ENCODE measurements at regions of chr3 and their contacts with region 1.

Region 1: GRCh38 chr3:50616003-50616769 is 765 bp upstream of the MAPKAPK3 start:
- DNase-seq: peak; percentile 95
- H3K4me3 ChIP-seq: peak overlapping the region; percentile 80 to 100 (median 82)
- H3K27ac ChIP-seq: peak overlapping the region; percentile 84 to 96 (median 88)
- H3K4me1 ChIP-seq: peaks cover 43 to 75% (median 59%) of the 10 kb centered on the region in 4 donors
- H3K27me3 ChIP-seq: no peaks in the 10 kb centered on the region
- CTCF ChIP-seq: peak in 2 of 3 experiments; percentile 98 to 100
- EP300 ChIP-seq: no peak
- POLR2A ChIP-seq: no peak

Region 2: GRCh38 chr3:50572158-50572557 is 44.0 kb before region 1 on chr3:
- intact Hi-C with region 1: loop called (anchors 1 kb)
- DNase-seq: no peak
- H3K4me3 ChIP-seq: no peak overlapping the region
- H3K27ac ChIP-seq: peak overlapping the region in 1 of 4 donors; percentile 64
- H3K4me1 ChIP-seq: peaks cover 16 to 45% (median 39%) of the 10 kb centered on the region in 4 donors
- H3K27me3 ChIP-seq: no peaks in the 10 kb centered on the region
- CTCF ChIP-seq: peak; percentile 92 to 95 (median 93)
- EP300 ChIP-seq: no peak
- POLR2A ChIP-seq: no peak

Region 3: GRCh38 chr3:50587806-50588758 is 28.1 kb before region 1 on chr3:
- intact Hi-C with region 1: no loop called
- DNase-seq: no peak
- H3K4me3 ChIP-seq: no peak overlapping the region
- H3K27ac ChIP-seq: no peak overlapping the region
- H3K4me1 ChIP-seq: peaks cover 31 to 43% (median 37%) of the 10 kb centered on the region in 4 donors
- H3K27me3 ChIP-seq: no peaks in the 10 kb centered on the region
- CTCF ChIP-seq: no peak
- EP300 ChIP-seq: no peak
- POLR2A ChIP-seq: no peak

Region 4: DNA sequence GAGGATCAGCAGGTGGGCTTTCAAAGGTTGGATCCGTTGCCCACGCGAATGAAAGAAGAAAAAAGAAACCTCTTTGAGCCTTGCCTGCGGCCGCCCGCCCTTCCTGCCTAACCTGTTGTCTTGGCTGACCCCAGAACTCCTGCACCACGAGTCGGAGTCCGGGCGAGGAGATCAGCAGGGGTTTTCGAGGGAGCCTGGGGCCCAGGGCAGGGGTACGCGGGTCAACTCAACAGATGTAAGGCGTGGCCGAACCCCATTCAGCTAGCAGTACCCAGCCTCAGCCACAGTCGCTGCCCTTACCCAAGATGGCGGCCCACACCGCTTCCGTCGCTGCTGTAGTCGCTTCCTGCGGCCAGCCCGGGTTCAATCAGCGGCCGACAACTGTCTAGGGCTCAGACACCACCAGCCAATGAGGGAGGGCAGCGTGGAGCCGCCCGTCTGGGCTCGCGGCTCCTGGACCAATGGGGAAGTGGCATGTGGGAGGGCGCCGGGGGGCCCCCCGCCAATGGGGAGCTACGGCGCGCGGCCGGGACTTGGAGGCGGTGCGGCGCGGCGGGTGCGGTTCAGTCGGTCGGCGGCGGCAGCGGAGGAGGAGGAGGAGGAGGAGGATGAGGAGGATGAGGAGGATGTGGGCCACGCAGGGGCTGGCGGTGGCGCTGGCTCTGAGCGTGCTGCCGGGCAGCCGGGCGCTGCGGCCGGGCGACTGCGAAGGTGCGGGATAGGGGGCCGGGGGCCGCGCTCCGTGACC is 768.7 kb after region 1 on chr3 and contains the start of gene MANF:
- intact Hi-C with region 1: loop called (anchors 5 kb)
- DNase-seq: peak; percentile 99
- H3K4me3 ChIP-seq: peak within 1 kb of the TSS; percentile 76 to 94 (median 82)
- H3K27ac ChIP-seq: peak within 1 kb of the TSS; percentile 88 to 97 (median 93)
- H3K4me1 ChIP-seq: peaks cover 33 to 59% (median 40%) of the 10 kb centered on the region in 4 donors
- H3K27me3 ChIP-seq: no peaks in the 10 kb centered on the region
- CTCF ChIP-seq: peak in 2 of 3 experiments; percentile 15 to 20
- EP300 ChIP-seq: no peak
- POLR2A ChIP-seq: peak; percentile 68
- total RNA-seq, gene MANF: 16.2 to 34.6 (median 24.9) TPM